ENCODE measurements at regions of chr1 and their contacts with region 1.

Region 1: DNA sequence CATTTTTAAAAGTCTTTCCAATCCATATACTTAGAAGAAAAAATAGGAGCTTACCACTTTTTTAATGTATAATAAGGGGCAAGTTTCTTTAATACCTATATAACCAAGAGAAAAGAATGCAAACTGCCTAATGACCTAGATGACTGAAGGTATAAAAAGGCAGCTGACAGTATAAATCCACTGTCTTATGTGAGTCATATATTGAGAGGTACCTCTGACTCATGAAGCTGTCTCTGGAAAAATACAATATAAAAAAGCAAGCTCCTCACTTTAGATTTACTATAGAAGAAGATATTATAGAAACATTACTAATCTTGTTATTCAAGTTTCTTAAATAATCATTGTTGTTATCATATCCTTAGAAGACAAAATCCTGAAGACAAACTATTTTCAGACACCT is 144.2 kb downstream of the VAV3 start:
- DNase-seq: no peak
- H3K4me3 Mint-ChIP-seq: no peak overlapping the region
- H3K27ac Mint-ChIP-seq: peak overlapping the region; percentile 83
- H3K4me1 Mint-ChIP-seq: peaks cover 30% of the 10 kb centered on the region
- H3K27me3 Mint-ChIP-seq: no peaks in the 10 kb centered on the region

Region 2: DNA sequence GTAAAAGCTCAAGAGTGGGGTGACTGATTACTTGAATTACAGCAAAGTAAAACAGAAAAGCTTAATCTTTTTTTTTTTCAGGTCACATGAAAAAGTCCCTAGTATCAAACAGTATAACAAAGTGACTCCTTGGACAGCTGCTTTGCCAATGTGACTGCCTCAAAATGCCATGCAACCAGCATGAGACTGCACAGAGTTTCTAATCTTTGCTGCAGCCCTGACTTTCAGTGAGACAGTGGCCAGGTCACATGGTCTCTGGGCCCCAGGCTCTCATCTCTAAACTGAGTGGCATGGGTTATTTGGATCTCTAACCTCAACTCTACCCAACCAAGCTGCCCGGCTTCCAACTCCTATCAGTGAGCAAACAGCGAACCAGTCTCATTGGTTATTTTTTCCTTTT is 24.8 kb before region 1 on chr1:
- CTCF ChIA-PET with region 1: no interaction called
- intact Hi-C with region 1: loop called (anchors 1 kb)
- DNase-seq: peak; percentile 25
- H3K4me3 Mint-ChIP-seq: no peak overlapping the region
- H3K27ac Mint-ChIP-seq: no peak overlapping the region
- H3K4me1 Mint-ChIP-seq: peaks cover 25% of the 10 kb centered on the region
- H3K27me3 Mint-ChIP-seq: no peaks in the 10 kb centered on the region

Region 3: DNA sequence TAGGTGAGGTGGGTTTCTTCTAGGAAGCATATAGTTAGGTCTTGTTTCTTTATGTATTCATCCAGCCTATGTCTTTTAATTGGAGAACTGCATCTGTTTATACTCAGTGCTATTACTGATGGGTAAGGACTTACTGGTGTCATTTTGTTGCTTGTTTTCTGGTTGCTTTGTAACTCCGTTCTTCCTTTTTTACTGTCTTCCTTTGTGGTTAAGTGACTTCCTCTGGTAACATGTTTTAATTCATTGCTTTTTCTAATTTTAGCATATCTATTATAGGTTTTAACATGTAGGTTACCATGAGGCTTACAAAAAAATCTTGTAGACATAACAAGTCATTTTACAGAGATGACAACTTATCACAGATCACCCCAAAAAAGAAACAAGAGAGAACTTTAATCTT is 16.7 kb before region 1 on chr1:
- CTCF ChIA-PET with region 1: no interaction called
- intact Hi-C with region 1: loop called (anchors 2 kb)
- DNase-seq: no peak
- H3K4me3 Mint-ChIP-seq: no peak overlapping the region
- H3K27ac Mint-ChIP-seq: no peak overlapping the region
- H3K4me1 Mint-ChIP-seq: peaks cover 32% of the 10 kb centered on the region
- H3K27me3 Mint-ChIP-seq: no peaks in the 10 kb centered on the region

Region 4: GRCh38 chr1:107877092-107877491 is 56.3 kb after region 1 on chr1:
- CTCF ChIA-PET with region 1: interaction called, 3 read pairs
- intact Hi-C with region 1: loop called (anchors 1 kb)
- DNase-seq: no peak
- H3K4me3 Mint-ChIP-seq: no peak overlapping the region
- H3K27ac Mint-ChIP-seq: no peak overlapping the region
- H3K4me1 Mint-ChIP-seq: peaks cover 39% of the 10 kb centered on the region
- H3K27me3 Mint-ChIP-seq: no peaks in the 10 kb centered on the region

Region 5: DNA sequence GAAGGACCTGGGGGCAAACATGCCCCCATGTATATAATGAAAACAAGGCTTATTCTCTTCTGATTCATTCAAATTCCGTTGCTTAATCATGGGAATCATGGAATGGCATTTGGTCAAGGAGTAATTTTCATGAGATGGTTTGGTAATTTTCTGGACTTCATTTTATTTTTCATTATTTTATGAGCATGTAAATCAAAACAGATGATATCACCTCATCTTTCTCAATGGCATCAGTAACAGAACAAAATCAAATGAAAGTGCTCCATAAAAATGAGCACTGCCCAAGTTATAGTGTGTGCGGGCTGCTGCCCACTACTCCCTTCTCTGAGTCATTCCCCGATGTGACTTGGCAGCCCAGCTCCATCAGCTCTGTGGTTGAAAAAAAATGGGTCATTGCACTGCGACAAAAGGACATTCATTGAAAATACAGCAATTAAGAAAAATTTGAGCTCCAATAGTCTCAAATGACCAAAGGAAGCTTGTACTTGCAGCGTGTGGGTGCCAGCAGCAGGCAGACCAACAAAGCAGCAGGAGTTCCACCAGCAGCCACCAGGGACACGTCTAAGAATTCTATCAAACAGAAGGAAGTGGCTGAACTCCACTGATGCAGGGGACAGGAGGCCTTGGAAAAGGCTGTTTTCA is 228.5 kb after region 1 on chr1:
- CTCF ChIA-PET with region 1: no interaction called
- intact Hi-C with region 1: loop called (anchors 1 kb)
- DNase-seq: peak; percentile 51
- H3K4me3 Mint-ChIP-seq: no peak overlapping the region
- H3K27ac Mint-ChIP-seq: no peak overlapping the region
- H3K4me1 Mint-ChIP-seq: peaks cover 35% of the 10 kb centered on the region
- H3K27me3 Mint-ChIP-seq: no peaks in the 10 kb centered on the region

Region 6: GRCh38 chr1:108079440-108080025 is 258.7 kb after region 1 on chr1:
- CTCF ChIA-PET with region 1: no interaction called
- intact Hi-C with region 1: loop called (anchors 1 kb)
- DNase-seq: peak; percentile 82
- H3K4me3 Mint-ChIP-seq: no peak overlapping the region
- H3K27ac Mint-ChIP-seq: peak overlapping the region; percentile 84
- H3K4me1 Mint-ChIP-seq: peaks cover 66% of the 10 kb centered on the region
- H3K27me3 Mint-ChIP-seq: no peaks in the 10 kb centered on the region

Measured in activated naive CD4-positive, alpha-beta T cell treated with anti-CD3 and anti-CD28 coated beads for 36 hours (primary cell).